ENCODE measurements at regions of chr22 and their contacts with region 1.

Region 1: GRCh38 chr22:36239401-36240171 is at the start of gene APOL2:
- DNase-seq: peak; percentile 94
- H3K4me3 Mint-ChIP-seq: peak within 1 kb of the TSS; percentile 100
- H3K27ac Mint-ChIP-seq: peak within 1 kb of the TSS; percentile 98
- H3K4me1 Mint-ChIP-seq: peaks cover 49% of the 10 kb centered on the region
- H3K27me3 Mint-ChIP-seq: peaks cover 11% of the 10 kb centered on the region

Region 2: GRCh38 chr22:36252754-36253517 is 13.3 kb after region 1 on chr22 and contains the start of gene APOL1:
- CTCF ChIA-PET with region 1: interaction called, 30 read pairs
- DNase-seq: peak; percentile 77
- H3K4me3 Mint-ChIP-seq: peak within 1 kb of the TSS; percentile 95
- H3K27ac Mint-ChIP-seq: peak within 1 kb of the TSS; percentile 91
- H3K4me1 Mint-ChIP-seq: peaks cover 58% of the 10 kb centered on the region
- H3K27me3 Mint-ChIP-seq: peaks cover 4% of the 10 kb centered on the region

Region 3: DNA sequence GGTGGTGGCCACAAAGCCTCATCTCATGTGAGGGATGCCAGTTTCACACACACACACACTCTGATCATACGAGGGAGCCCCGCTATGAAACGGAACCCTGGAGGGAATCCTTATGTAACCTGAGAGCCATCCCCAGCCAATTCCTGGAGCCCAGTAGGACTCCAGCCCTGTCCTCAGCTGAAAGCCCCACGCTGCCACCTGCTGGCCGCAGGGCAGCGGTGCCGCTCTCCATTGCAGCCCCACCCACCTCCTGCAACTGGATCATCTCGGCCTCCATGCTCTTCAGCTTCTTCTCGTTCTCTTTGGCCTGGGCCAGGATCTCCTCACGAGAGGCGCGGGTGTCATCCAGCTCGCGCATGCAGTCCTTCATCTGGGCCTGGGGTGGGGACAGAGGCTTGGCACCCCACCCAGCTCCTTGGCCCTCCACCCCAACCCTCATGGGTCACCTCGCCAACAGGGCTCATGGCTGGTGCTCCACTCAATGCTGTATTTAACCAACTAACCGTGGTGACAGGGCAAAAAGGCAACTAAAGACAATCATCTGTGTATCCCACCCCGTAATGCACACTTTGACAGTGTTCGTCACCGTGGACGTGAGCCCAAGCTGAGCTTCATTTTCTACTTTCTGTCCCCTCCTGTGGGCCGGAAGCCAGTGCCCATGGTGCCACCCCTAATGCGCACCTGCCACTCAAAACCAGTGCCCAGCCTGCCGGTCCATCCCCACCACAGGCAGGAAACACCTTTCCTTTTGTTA is 47.1 kb after region 1 on chr22:
- CTCF ChIA-PET with region 1: no interaction called
- DNase-seq: peak; percentile 74
- H3K4me3 Mint-ChIP-seq: no peak overlapping the region
- H3K27ac Mint-ChIP-seq: peak overlapping the region; percentile 86
- H3K4me1 Mint-ChIP-seq: peaks cover 46% of the 10 kb centered on the region
- H3K27me3 Mint-ChIP-seq: no peaks in the 10 kb centered on the region

Measured in activated naive CD4-positive, alpha-beta T cell treated with anti-CD3 and anti-CD28 coated beads, Interleukin-2, amount 10 ng/mL, durations not matched to agents 7 days and 5 days (primary cell).